Right ventricle myocardium inferior (tissue), 1 donor: ENCODE measurements at regions of chr5 and their contacts with region 1.

Region 1: GRCh38 chr5:38497946-38498345 is 58.5 kb downstream of the LIFR start:
- DNase-seq: no peak
- ATAC-seq: no peak

Region 2: DNA sequence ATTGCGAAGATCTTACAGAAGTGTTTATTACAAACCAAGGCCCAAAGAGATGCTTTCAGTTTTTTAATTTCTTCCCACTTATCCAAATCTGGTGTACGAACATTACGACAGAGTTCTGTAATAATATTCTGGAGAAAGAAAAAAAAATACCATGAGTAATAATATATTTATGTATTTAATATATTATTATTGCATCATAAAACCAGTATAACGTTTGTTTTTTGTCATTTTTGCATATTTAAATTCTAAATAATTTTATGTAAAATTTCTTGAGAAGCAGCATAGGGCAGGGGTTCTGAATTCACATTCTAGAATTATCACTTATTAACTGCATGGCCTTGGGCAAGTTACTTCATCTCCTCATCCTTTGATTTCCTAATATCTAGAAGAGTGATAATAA is 455.5 kb after region 1 on chr5:
- intact Hi-C with region 1: loop called (anchors 10 kb)
- DNase-seq: no peak
- ATAC-seq: no peak